ENCODE measurements at regions of chr6 and their contacts with region 1.

Region 1: DNA sequence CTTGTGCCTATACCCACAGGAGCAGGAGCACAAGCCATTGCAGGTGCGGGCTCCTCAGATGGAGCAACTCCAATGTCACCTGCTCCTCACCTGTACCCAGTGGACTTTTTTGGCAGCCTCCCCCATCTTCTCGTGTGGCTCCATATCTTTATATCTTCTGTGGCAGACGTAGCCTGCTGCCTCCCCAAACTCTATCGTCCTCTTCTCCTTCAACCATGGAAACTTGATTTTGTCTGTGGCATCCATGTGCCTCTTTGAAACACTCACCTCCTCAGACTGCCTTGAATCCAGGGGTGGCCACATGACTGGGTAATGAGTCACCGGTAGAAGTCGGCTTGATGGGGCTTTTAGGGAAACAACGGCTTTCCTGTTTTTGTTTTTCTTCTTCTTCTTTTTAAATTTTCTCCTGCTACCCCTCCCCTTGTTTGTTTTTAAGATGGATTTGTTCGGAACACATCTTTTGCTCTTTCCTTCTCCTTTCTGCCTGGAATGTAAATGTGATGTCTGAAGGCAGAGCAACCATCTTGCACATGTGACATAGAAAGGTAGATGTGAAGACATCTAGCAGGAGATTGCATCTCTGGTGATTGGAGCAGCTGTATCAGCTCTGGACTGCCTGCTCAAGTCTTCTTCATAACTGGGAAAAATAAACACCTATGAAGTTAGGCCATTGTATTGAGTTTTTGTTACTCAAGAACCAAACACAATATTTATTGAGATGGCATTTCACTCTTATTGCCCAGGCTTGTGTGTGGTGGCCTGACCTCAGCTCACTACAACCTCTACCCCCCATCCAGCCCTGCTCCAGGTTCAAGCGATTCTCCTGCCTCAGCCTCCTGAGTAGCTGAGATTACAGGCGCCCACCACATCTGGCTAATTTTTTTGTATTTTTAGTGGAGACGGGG is 69.9 kb upstream of the DDR1 start:
- DNase-seq: peak; percentile 65 to 84
- H3K4me3 ChIP-seq: peak overlapping the region; percentile 11; the same call in 1 of the 2 replicates
- H3K27ac ChIP-seq: peak overlapping the region; percentile 94
- H3K4me1 ChIP-seq: peaks cover 82% of the 10 kb centered on the region
- H3K27me3 ChIP-seq: no peaks in the 10 kb centered on the region
- CTCF ChIP-seq: no peak

Region 2: DNA sequence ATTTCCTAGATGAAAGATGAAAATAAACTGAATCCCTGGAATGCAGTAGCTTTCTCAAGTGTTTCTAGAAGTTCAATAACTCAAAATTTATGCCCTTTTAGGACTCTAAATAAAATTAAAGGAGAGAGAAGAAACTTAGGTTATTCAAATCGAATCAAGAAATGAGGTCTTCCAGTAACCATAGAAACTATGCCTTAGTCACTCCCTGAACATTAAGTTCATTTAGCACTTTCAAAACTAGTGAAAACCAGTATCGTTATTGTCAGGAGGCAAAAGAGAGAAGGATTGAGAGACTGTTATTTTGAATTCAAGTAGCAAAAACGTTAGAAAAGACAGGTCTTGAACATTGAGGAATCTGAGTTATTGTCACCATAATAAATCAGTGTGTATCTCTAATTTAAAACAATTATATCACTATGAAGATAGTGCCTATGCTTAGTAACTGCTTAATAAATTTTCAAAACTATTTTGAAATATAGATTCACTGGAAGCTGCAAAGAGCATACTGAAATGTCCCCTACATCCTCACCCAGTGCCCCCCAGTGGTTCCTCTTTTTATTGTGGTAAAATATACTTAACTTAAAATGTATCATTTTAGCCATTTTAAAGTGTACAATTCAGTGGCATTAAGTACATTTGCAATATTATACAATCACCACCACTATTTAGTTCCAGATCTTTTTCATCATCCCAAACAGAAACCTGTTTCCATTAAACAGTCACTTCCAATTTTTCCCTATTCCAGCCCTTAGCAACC is 464.8 kb before region 1 on chr6:
- CTCF ChIA-PET with region 1: no interaction called
- POLR2A ChIA-PET with region 1: no interaction called
- intact Hi-C with region 1: no loop called
- DNase-seq: no peak
- H3K4me3 ChIP-seq: no peak overlapping the region
- H3K27ac ChIP-seq: no peak overlapping the region
- H3K4me1 ChIP-seq: peaks cover 6% of the 10 kb centered on the region
- H3K27me3 ChIP-seq: no peaks in the 10 kb centered on the region
- CTCF ChIP-seq: no peak

Region 3: GRCh38 chr6:30907758-30908591 is 93.6 kb after region 1 on chr6 and contains the start of gene GTF2H4:
- CTCF ChIA-PET with region 1: interaction called, 5 read pairs
- POLR2A ChIA-PET with region 1: interaction called, 16 read pairs
- intact Hi-C with region 1: no loop called
- DNase-seq: peak; percentile 97 to 98
- H3K4me3 ChIP-seq: peak within 1 kb of the TSS; percentile 100
- H3K27ac ChIP-seq: peak within 1 kb of the TSS; percentile 43
- H3K4me1 ChIP-seq: peaks cover 7% of the 10 kb centered on the region
- H3K27me3 ChIP-seq: no peaks in the 10 kb centered on the region
- CTCF ChIP-seq: no peak
- total RNA-seq, gene GTF2H4: 31.3 and 43.9 TPM in 2 replicates